ENCODE measurements at regions of chr12 and their contacts with region 1.

Region 1: DNA sequence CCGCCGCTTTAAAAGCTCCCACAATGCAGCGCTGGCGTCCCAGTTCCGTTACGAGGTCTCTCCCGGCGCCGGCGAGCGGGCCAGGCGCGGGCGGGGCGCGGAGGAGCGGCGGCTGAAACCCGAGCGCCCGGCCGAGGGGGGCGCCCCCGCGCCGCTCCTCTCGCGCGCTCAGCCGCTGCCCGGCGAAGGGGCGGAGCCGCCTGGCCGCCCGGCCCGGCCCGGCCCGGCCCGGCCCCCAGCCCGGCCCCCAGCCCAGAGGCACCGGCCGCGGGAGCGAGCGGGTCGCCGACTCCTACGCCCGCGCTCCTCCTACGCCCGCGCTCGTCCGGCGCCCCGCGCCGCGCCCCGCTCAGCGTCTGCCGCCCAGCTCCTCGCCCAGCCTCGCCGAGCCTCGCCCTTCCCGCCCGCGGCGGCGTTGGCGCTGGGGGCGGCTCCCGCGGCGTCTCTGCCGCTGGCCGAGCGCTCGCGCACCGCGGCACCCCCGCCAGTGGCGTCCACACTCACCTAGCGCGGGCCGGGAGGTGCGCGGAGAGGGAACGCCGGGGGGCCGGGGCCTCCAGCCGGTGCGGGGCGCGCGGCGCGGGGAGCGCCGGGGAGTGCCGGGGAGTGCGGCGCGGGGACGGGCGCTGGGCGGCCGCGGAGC is at the start of gene RASSF8:
- DNase-seq: peak; percentile 90
- ATAC-seq: peak; percentile 79
- H3K4me3 ChIP-seq: peak within 1 kb of the TSS; percentile 89
- H3K27ac ChIP-seq: peak within 1 kb of the TSS; percentile 96
- H3K4me1 ChIP-seq: peaks cover 26% of the 10 kb centered on the region
- H3K27me3 ChIP-seq: no peaks in the 10 kb centered on the region
- CTCF ChIP-seq: no peak
- total RNA-seq, gene RASSF8: 51.2 and 87.8 TPM in 2 replicates

Region 2: GRCh38 chr12:25677232-25677937 is 281.2 kb before region 1 on chr12:
- CTCF ChIA-PET with region 1: no interaction called
- POLR2A ChIA-PET with region 1: no interaction called
- intact Hi-C with region 1: loop called (anchors 1 kb)
- DNase-seq: peak; percentile 46
- ATAC-seq: peak; percentile 74
- H3K4me3 ChIP-seq: no peak overlapping the region
- H3K27ac ChIP-seq: no peak overlapping the region
- H3K4me1 ChIP-seq: peaks cover 5% of the 10 kb centered on the region; the same call in 1 of the 2 replicates
- H3K27me3 ChIP-seq: no peaks in the 10 kb centered on the region
- CTCF ChIP-seq: peak; percentile 52

Region 3: DNA sequence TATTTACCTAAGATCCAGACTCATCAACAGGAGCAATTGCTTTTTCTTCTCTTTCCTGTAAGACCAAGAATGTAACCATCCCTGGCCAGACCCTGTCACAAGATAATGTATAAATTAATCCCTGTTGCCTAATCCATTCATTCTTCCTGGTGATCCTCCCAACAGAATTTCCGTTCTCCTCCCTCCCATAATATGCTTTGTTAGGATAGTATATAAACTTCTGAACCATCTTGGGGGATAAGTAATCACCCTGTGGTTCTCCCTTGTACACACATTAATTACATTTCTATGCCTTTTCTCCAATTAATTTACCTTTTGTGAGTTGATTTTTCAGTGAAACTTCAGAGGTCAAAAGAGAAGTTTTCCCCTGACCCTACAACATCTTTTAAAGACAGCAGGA is 76.3 kb before region 1 on chr12:
- CTCF ChIA-PET with region 1: no interaction called
- POLR2A ChIA-PET with region 1: interaction called, 14 read pairs
- intact Hi-C with region 1: no loop called
- DNase-seq: no peak
- ATAC-seq: no peak
- H3K4me3 ChIP-seq: no peak overlapping the region
- H3K27ac ChIP-seq: no peak overlapping the region
- H3K4me1 ChIP-seq: peaks cover 7% of the 10 kb centered on the region; the same call in 1 of the 2 replicates
- H3K27me3 ChIP-seq: no peaks in the 10 kb centered on the region
- CTCF ChIP-seq: no peak

Region 4: GRCh38 chr12:25970916-25971653 is 12.5 kb after region 1 on chr12:
- CTCF ChIA-PET with region 1: interaction called, 4 read pairs
- POLR2A ChIA-PET with region 1: no interaction called
- intact Hi-C with region 1: loop called (anchors 1 kb)
- DNase-seq: no peak
- ATAC-seq: no peak
- H3K4me3 ChIP-seq: no peak overlapping the region
- H3K27ac ChIP-seq: peak overlapping the region; percentile 81
- H3K4me1 ChIP-seq: peaks cover 39% of the 10 kb centered on the region
- H3K27me3 ChIP-seq: no peaks in the 10 kb centered on the region
- CTCF ChIP-seq: peak; percentile 44; the same call in 1 of the 2 replicates

Region 5: DNA sequence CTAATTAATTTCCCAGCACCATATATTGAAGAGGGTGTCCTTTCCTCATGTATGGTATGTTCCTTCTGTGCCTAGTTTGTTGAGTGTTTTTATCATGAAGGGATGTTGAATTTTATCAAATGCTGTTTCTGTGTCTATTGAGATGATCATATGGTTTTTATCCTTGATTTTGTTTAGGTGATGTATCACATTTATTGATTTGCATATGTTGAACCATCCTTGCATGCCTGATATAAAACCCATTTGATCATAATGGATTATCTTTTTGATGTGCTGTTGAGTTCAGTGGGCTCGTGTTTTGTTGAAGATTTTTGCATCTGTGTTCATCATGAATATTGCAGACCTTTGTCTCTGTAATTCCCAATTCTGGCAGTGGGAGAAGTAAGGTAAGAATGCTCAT is 44.5 kb after region 1 on chr12:
- CTCF ChIA-PET with region 1: no interaction called
- POLR2A ChIA-PET with region 1: no interaction called
- intact Hi-C with region 1: no loop called
- DNase-seq: no peak
- ATAC-seq: no peak
- H3K4me3 ChIP-seq: no peak overlapping the region
- H3K27ac ChIP-seq: no peak overlapping the region
- H3K4me1 ChIP-seq: peaks cover 16% of the 10 kb centered on the region
- H3K27me3 ChIP-seq: no peaks in the 10 kb centered on the region
- CTCF ChIP-seq: no peak

Region 6: DNA sequence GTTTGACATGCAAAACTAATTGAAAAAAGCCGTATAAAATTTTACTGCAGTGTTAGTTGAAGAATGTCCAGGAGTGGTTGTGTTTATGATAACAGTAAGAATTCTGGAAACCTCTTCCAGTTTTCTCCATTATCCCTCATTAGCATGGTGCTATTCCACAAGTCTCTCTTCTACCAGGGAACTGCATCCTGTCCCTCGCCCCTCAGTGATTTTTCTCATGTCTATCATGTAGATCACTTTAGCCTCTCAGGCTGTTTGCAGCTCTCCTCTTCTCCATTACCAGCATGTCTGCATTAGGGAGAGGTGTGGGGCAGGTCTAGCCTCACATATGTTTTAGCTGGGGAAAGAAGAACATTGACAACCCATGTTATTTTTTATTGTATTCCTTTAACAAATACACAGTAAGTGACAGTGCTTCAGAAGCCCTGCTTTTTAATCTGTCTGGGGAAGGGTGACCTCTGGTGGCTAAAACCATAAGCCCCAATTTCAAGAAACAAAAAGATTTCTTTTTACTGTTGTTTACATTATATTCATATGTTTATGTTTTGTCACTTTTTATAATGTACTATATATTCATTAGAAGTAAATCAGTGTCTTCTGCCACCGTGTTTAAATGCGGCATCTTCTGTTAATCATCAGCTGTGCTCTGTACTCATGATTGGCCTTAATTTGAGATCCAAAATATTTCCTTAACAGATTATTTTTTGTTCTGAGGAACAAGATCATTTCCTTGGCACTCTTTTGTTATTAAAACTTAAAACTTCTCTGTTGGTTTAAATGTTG is 70.6 kb after region 1 on chr12:
- CTCF ChIA-PET with region 1: no interaction called
- POLR2A ChIA-PET with region 1: interaction called, 8 read pairs
- intact Hi-C with region 1: loop called (anchors 1 kb)
- DNase-seq: peak; percentile 85
- ATAC-seq: peak; percentile 56
- H3K4me3 ChIP-seq: no peak overlapping the region
- H3K27ac ChIP-seq: no peak overlapping the region
- H3K4me1 ChIP-seq: peaks cover 29% of the 10 kb centered on the region
- H3K27me3 ChIP-seq: no peaks in the 10 kb centered on the region
- CTCF ChIP-seq: peak; percentile 97

Region 7: DNA sequence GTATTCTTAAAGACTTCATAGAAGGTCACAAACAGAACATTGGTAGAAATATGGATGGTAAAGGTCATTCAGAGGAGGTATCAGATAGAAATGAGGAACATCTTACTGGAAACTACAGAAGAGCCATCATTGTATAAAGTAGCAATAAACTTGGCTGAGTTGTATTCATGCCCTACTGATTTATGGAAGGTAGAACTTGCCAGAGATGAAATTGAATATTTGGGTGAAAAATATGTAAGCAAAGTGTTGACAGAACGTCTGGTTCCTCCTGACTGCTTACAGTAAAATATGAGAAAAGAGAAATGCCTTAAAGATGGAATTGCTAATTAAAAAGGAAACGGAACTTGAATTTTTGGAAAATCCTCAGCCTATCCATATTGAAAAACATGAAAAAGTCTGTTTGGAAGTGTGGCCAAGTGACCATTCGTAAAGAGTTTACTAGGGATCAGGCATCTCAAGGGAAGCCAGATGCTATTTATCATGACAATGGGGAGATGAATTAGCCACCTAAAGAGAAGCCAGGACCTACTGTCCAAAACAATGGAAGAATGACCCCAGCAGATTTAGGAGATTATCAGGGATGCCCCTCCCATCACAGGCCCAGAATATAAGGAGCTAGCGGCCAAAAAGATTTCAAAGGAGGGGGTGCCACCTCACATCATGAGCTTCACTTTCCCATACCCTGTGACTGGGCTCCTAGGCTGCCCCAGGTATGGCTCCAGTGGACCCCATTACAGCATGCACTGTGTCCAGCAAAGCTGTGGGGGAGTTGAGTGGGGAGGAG is 685.2 kb after region 1 on chr12:
- CTCF ChIA-PET with region 1: interaction called, 15 read pairs
- POLR2A ChIA-PET with region 1: no interaction called
- intact Hi-C with region 1: no loop called
- DNase-seq: no peak
- ATAC-seq: no peak
- H3K4me3 ChIP-seq: no peak overlapping the region
- H3K27ac ChIP-seq: no peak overlapping the region
- H3K4me1 ChIP-seq: peaks cover 11% of the 10 kb centered on the region
- H3K27me3 ChIP-seq: no peaks in the 10 kb centered on the region
- CTCF ChIP-seq: no peak